Heart right ventricle (tissue), 16 donors: ENCODE measurements at regions of chr4 and their contacts with region 1.

Region 1: GRCh38 chr4:128809477-128810330 is at the start of gene JADE1:
- DNase-seq: peak; percentile 86 to 94
- ATAC-seq: peak; percentile 66 to 86 (median 74)
- H3K4me3 ChIP-seq: peak within 1 kb of the TSS; percentile 63 to 98 (median 85)
- H3K27ac ChIP-seq: peak within 1 kb of the TSS; percentile 88 to 98 (median 95)
- H3K4me1 ChIP-seq: peaks cover 0 to 18% (median 12%) of the 10 kb centered on the region in 9 donors
- H3K27me3 ChIP-seq: no peaks in the 10 kb centered on the region
- CTCF ChIP-seq: peak; percentile 35 to 76 (median 57)
- total RNA-seq, gene JADE1: 19.4 to 32.3 (median 23.5) TPM

Region 2: GRCh38 chr4:128191115-128191781 is 618.5 kb before region 1 on chr4:
- intact Hi-C with region 1: loop called in 1 of 10 experiments (anchors 5 kb)
- DNase-seq: peak; percentile 21 to 55
- ATAC-seq: peak; percentile 74 to 92 (median 84)
- H3K4me3 ChIP-seq: no peak overlapping the region
- H3K27ac ChIP-seq: no peak overlapping the region
- H3K4me1 ChIP-seq: peaks cover 0 to 10% (median 0%) of the 10 kb centered on the region in 9 donors
- H3K27me3 ChIP-seq: no peaks in the 10 kb centered on the region
- CTCF ChIP-seq: peak; percentile 71 to 90 (median 86)

Region 3: GRCh38 chr4:128558896-128559679 is 250.6 kb before region 1 on chr4:
- intact Hi-C with region 1: loop called in 3 of 10 experiments (anchors 5 to 10 kb)
- DNase-seq: no peak
- ATAC-seq: peak in 7 of 8 donors; percentile 20 to 72 (median 54)
- H3K4me3 ChIP-seq: no peak overlapping the region
- H3K27ac ChIP-seq: peak overlapping the region in 6 of 10 donors; percentile 5 to 80 (median 36)
- H3K4me1 ChIP-seq: peaks cover 0 to 23% (median 7%) of the 10 kb centered on the region in 9 donors
- H3K27me3 ChIP-seq: no peaks in the 10 kb centered on the region
- CTCF ChIP-seq: no peak

Region 4: DNA sequence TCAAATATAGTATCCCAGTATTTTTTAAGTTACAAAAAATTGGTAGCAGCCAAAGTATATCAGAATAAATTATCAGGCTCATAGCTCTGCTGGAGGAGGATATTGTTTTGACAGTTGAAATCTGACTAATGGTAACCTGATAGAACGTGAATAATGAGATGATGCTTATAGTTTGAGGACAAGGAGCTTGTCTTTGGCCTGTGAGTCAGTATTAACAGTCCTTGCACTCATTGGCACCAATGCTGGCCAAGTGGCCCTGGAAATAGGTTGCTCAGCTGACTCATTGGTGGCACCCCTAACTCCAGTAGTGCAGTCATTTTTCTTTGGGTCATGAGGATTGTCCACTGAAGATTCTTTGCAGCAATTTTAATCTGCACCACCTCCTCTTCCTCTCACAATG is 203.5 kb before region 1 on chr4:
- intact Hi-C with region 1: no loop called
- DNase-seq: no peak
- ATAC-seq: no peak
- H3K4me3 ChIP-seq: no peak overlapping the region
- H3K27ac ChIP-seq: no peak overlapping the region
- H3K4me1 ChIP-seq: peaks cover 0 to 12% (median 8%) of the 10 kb centered on the region in 9 donors
- H3K27me3 ChIP-seq: no peaks in the 10 kb centered on the region
- CTCF ChIP-seq: no peak

Region 5: GRCh38 chr4:128663336-128663735 is 146.4 kb before region 1 on chr4:
- intact Hi-C with region 1: loop called in 3 of 10 experiments (anchors 10 kb)
- DNase-seq: no peak
- ATAC-seq: no peak
- H3K4me3 ChIP-seq: no peak overlapping the region
- H3K27ac ChIP-seq: no peak overlapping the region
- H3K4me1 ChIP-seq: peaks cover 0 to 37% (median 7%) of the 10 kb centered on the region in 9 donors
- H3K27me3 ChIP-seq: no peaks in the 10 kb centered on the region
- CTCF ChIP-seq: no peak

Region 6: GRCh38 chr4:128831531-128832242 is 22.0 kb after region 1 on chr4:
- intact Hi-C with region 1: loop called in 1 of 10 experiments (anchors 2 kb)
- DNase-seq: peak in 1 of 2 donors; percentile 11
- ATAC-seq: no peak
- H3K4me3 ChIP-seq: no peak overlapping the region
- H3K27ac ChIP-seq: peak overlapping the region in 9 of 10 donors; percentile 20 to 58 (median 41)
- H3K4me1 ChIP-seq: peaks cover 15 to 81% (median 53%) of the 10 kb centered on the region in 9 donors
- H3K27me3 ChIP-seq: no peaks in the 10 kb centered on the region
- CTCF ChIP-seq: no peak

Region 7: GRCh38 chr4:129093191-129093920 is 283.7 kb after region 1 on chr4 and contains the start of gene SCLT1:
- intact Hi-C with region 1: loop called in 1 of 10 experiments (anchors 10 kb)
- DNase-seq: peak; percentile 99
- ATAC-seq: peak; percentile 99 to 100 (median 99)
- H3K4me3 ChIP-seq: peak within 1 kb of the TSS; percentile 50 to 86 (median 78)
- H3K27ac ChIP-seq: peak within 1 kb of the TSS; percentile 80 to 98 (median 94)
- H3K4me1 ChIP-seq: peaks cover 0 to 53% (median 25%) of the 10 kb centered on the region in 9 donors
- H3K27me3 ChIP-seq: no peaks in the 10 kb centered on the region
- CTCF ChIP-seq: no peak
- total RNA-seq, gene SCLT1: 7.3 to 12.4 (median 10.3) TPM

Region 8: DNA sequence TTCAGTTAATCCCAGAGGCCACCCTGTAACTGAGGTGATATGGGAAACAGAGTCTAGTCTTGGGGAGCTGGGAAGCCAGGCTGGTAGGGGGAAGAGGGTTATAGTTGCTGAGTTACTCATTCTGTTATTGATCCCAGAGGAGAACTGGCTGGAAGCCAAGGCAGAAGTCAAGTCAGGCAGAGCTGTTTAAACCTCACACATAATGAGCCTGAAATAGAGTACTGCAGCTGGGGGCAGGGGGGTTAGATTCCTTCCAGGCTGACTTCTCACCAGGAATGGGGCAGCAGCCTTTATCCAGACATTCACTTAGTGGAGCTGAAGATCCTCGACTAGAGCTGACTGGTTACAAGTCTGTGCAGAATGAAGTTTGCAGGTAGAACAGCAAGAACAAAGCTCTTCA is 431.1 kb after region 1 on chr4:
- intact Hi-C with region 1: no loop called
- DNase-seq: no peak
- ATAC-seq: no peak
- H3K4me3 ChIP-seq: no peak overlapping the region
- H3K27ac ChIP-seq: no peak overlapping the region
- H3K4me1 ChIP-seq: peaks cover 0 to 7% (median 0%) of the 10 kb centered on the region in 9 donors
- H3K27me3 ChIP-seq: no peaks in the 10 kb centered on the region
- CTCF ChIP-seq: no peak